ENCODE measurements at regions of chr17 and their contacts with region 1.

Region 1: DNA sequence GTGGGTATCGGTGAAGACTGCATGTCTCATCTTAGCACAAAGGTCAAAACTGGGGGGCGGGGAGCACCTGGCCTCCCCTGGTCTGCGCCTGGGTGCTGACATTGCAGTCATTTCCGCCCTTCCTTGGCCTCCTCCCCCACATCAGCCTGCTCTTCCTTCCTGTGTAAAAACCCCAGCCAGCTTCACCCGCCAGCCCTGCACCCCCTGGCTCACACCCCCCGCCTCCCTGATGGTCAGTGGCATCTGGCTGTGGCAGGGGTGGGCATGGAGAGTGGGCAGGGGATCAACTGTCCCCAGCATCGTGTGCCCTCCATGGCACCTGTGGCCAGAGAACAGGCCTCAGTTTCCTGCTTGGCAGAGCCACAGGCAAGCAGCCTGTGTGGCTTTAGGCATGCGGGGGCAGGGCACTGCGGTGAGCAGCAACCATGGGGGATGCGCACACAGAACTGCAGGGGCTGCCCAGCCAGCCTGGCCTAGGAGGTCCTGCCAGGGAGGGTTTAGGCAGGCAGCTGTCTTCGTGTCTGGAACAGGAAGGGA is 26.5 kb upstream of the LASP1NB start:
- DNase-seq: peak; percentile 56 to 93 (median 81)
- ATAC-seq: peak; percentile 85
- H3K4me3 ChIP-seq: peak overlapping the region; percentile 45
- H3K4me3 Mint-ChIP-seq: peak overlapping the region; percentile 87
- H3K27ac ChIP-seq: peak overlapping the region; percentile 90 to 94
- H3K27ac Mint-ChIP-seq: peak overlapping the region; percentile 94
- H3K4me1 ChIP-seq: peaks cover 87% of the 10 kb centered on the region
- H3K4me1 Mint-ChIP-seq: peaks cover 69% of the 10 kb centered on the region
- H3K27me3 ChIP-seq: no peaks in the 10 kb centered on the region
- H3K27me3 Mint-ChIP-seq: no peaks in the 10 kb centered on the region
- CTCF ChIP-seq: no peak

Region 2: GRCh38 chr17:38853292-38854219 is 45.3 kb before region 1 on chr17 and contains the start of gene RPL23:
- CTCF ChIA-PET with region 1: interaction called, 3 read pairs
- POLR2A ChIA-PET with region 1: interaction called, 29 read pairs
- intact Hi-C with region 1: loop called in 1 of 2 experiments (anchors 5 kb)
- DNase-seq: peak; percentile 77 to 97 (median 86)
- ATAC-seq: peak; percentile 80
- H3K4me3 ChIP-seq: peak within 1 kb of the TSS; percentile 67
- H3K4me3 Mint-ChIP-seq: peak within 1 kb of the TSS; percentile 90
- H3K27ac ChIP-seq: peak within 1 kb of the TSS; percentile 86 to 92
- H3K27ac Mint-ChIP-seq: peak within 1 kb of the TSS; percentile 96
- H3K4me1 ChIP-seq: peaks cover 29% of the 10 kb centered on the region
- H3K4me1 Mint-ChIP-seq: peaks cover 39% of the 10 kb centered on the region
- H3K27me3 ChIP-seq: no peaks in the 10 kb centered on the region
- H3K27me3 Mint-ChIP-seq: no peaks in the 10 kb centered on the region
- CTCF ChIP-seq: no peak
- total RNA-seq, gene RPL23: 2,293 to 2,296 TPM

Region 3: DNA sequence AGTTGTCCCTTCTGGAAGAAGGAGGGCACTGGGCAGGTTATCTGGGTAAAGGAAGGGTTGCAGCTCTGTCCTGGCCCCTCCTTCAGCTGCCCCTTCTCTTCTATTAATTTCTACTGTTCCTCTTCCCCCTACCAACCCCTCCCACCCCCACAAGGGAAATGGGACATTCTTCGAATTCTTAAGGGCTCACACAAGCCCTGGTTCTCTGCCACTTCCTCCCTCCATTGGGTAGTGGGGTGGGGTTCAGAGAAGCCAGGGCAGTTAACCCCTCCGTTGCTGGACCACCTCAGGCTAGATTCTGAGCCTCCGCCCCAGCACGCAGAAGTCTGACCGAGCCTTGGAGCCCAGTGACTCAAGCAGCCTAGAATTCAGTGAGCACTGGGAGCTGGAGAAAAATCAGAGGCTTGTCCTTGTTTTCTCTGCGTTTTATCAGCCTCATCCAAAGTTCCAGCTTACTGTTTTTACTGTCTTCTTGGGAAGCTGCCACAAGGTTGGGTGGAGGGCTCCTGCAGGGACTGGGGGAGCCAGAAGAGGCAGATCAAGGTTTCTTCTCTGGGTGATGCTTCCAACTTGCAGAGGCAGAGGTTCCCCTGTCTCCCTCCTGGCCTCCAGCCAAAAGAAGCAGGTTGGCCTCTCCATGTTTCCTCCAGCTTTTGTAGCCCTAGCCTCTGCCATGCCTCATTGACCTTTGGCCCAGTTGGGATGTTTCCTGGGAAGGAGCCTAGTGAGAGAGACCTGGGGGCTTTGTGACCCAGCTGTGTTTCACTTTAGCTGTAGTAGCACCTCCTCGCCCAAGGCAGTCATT is 18.8 kb before region 1 on chr17:
- CTCF ChIA-PET with region 1: interaction called, 3 read pairs
- POLR2A ChIA-PET with region 1: interaction called, 37 read pairs
- intact Hi-C with region 1: no loop called
- DNase-seq: peak in 3 of 14 experiments; percentile 29 to 56 (median 51)
- ATAC-seq: peak; percentile 24
- H3K4me3 ChIP-seq: peak overlapping the region; percentile 28
- H3K4me3 Mint-ChIP-seq: peak overlapping the region; percentile 79
- H3K27ac ChIP-seq: peak overlapping the region; percentile 42 to 44
- H3K27ac Mint-ChIP-seq: peak overlapping the region; percentile 89
- H3K4me1 ChIP-seq: peaks cover 93% of the 10 kb centered on the region
- H3K4me1 Mint-ChIP-seq: peaks cover 87% of the 10 kb centered on the region
- H3K27me3 ChIP-seq: no peaks in the 10 kb centered on the region
- H3K27me3 Mint-ChIP-seq: no peaks in the 10 kb centered on the region
- CTCF ChIP-seq: no peak

Region 4: DNA sequence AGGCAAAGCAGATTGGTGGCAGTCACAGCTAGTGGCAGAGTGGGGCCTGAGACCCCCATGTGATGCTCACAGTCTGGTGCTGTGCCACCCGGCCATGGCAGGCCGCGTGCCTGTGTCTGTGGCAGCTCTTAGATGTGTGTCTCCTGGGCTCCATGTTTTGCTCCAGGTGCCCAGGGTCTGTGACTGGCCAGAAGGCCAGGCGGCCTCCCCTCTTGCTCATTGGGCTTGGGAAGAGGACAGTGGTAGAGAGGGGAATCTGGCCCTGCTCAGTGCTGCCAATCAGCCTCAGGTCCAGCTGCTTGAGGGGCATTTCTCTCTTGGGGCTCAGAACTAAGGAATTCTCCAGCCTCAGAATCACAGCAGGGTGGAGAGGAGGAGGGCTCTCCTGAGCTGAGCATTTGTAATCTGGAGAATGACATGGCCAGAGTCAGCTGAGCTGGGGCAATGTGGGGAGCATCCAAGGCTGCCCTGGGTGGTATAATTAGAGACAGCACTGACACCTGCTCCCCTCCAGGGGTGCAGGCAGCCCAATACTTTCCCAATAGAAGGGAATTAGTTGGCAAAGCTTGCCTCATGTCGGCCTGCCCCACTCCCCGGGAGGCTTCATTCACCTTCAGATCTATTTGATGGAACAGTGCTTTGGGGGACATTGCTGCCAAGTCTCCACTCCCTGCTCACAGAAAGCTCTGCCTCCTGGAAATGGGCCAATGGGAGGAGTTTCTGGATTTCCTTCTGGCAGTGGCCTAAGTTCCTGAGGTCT is 23.8 kb after region 1 on chr17:
- CTCF ChIA-PET with region 1: interaction called, 13 read pairs
- POLR2A ChIA-PET with region 1: interaction called, 4 read pairs
- intact Hi-C with region 1: no loop called
- DNase-seq: peak in 1 of 14 experiments; percentile 21
- ATAC-seq: no peak
- H3K4me3 ChIP-seq: no peak overlapping the region
- H3K4me3 Mint-ChIP-seq: no peak overlapping the region
- H3K27ac ChIP-seq: no peak overlapping the region
- H3K27ac Mint-ChIP-seq: peak overlapping the region; percentile 82
- H3K4me1 ChIP-seq: peaks cover 14% of the 10 kb centered on the region
- H3K4me1 Mint-ChIP-seq: peaks cover 37% of the 10 kb centered on the region
- H3K27me3 ChIP-seq: no peaks in the 10 kb centered on the region
- H3K27me3 Mint-ChIP-seq: no peaks in the 10 kb centered on the region
- CTCF ChIP-seq: no peak

Measured in CD4-positive, alpha-beta T cell (primary cell).